ENCODE measurements at regions of chr1 and their contacts with region 1.

Region 1: GRCh38 chr1:101238681-101239094 is 1.9 kb downstream of the S1PR1 start:
- DNase-seq: peak; percentile 73 to 92 (median 86)
- ATAC-seq: peak; percentile 25
- H3K4me3 ChIP-seq: peak overlapping the region; percentile 87
- H3K4me3 Mint-ChIP-seq: peak overlapping the region; percentile 98
- H3K27ac ChIP-seq: peak overlapping the region; percentile 56 to 97
- H3K27ac Mint-ChIP-seq: peak overlapping the region; percentile 97
- H3K4me1 ChIP-seq: peaks cover 48% of the 10 kb centered on the region
- H3K4me1 Mint-ChIP-seq: peaks cover 71% of the 10 kb centered on the region
- H3K27me3 ChIP-seq: no peaks in the 10 kb centered on the region
- H3K27me3 Mint-ChIP-seq: peaks cover 3% of the 10 kb centered on the region
- CTCF ChIP-seq: peak; percentile 98

Region 2: DNA sequence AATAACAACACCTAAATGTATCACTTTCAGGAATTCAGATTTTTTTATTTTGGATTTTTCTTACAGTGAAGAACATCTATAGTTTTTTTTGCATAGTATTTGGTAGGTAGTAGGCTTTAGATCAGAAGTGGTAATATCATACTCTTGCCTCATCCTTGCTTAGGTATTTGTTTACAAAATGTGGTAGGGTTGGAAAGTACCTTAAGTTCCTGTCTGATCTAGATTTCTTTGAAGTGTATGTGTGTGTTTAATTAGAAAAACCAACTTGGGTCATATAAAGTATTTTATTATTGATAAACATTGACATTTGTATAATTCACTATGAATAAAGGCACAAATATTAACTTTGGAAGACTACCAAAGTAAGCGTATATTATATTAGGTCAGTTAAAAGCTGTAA is 786.0 kb before region 1 on chr1:
- CTCF ChIA-PET with region 1: no interaction called
- POLR2A ChIA-PET with region 1: no interaction called
- intact Hi-C with region 1: loop called in 1 of 2 experiments (anchors 5 kb)
- DNase-seq: peak in 3 of 14 experiments; percentile 83 to 87 (median 86)
- ATAC-seq: peak; percentile 88
- H3K4me3 ChIP-seq: no peak overlapping the region
- H3K4me3 Mint-ChIP-seq: peak overlapping the region; percentile 70
- H3K27ac ChIP-seq: peak overlapping the region; percentile 77 to 90
- H3K27ac Mint-ChIP-seq: peak overlapping the region; percentile 94
- H3K4me1 ChIP-seq: peaks cover 51% of the 10 kb centered on the region
- H3K4me1 Mint-ChIP-seq: peaks cover 93% of the 10 kb centered on the region
- H3K27me3 ChIP-seq: no peaks in the 10 kb centered on the region
- H3K27me3 Mint-ChIP-seq: no peaks in the 10 kb centered on the region
- CTCF ChIP-seq: no peak

Region 3: DNA sequence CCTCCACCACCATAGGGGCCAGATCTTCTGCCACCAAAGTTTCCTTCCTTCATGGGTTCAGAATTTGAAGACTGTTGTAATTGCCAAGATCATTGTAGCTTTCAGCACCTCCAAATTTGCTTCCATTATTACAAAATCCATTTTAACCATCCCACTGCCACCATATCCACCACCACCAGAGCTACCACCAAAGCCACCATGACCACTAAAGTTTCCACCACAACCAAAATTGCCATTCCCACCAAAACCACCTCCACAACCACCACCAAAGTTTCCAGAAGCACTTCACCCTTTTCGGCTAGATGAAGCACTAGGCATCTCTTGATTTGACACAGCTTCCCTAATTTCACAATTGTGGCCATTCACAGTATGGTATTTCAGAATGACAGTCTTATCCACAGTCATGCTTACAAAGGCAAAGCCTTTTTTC is 297.6 kb before region 1 on chr1:
- CTCF ChIA-PET with region 1: no interaction called
- POLR2A ChIA-PET with region 1: interaction called, 12 read pairs
- intact Hi-C with region 1: no loop called
- DNase-seq: no peak
- ATAC-seq: no peak
- H3K4me3 ChIP-seq: no peak overlapping the region
- H3K4me3 Mint-ChIP-seq: no peak overlapping the region
- H3K27ac ChIP-seq: no peak overlapping the region
- H3K27ac Mint-ChIP-seq: peak overlapping the region; percentile 90
- H3K4me1 ChIP-seq: peaks cover 11% of the 10 kb centered on the region
- H3K4me1 Mint-ChIP-seq: peaks cover 66% of the 10 kb centered on the region
- H3K27me3 ChIP-seq: no peaks in the 10 kb centered on the region
- H3K27me3 Mint-ChIP-seq: no peaks in the 10 kb centered on the region
- CTCF ChIP-seq: no peak

Region 4: GRCh38 chr1:101071470-101071891 is 167.2 kb before region 1 on chr1:
- CTCF ChIA-PET with region 1: interaction called, 3 read pairs
- POLR2A ChIA-PET with region 1: interaction called, 3 read pairs
- intact Hi-C with region 1: loop called in 1 of 2 experiments (anchors 5 kb)
- DNase-seq: no peak
- ATAC-seq: no peak
- H3K4me3 ChIP-seq: no peak overlapping the region
- H3K4me3 Mint-ChIP-seq: no peak overlapping the region
- H3K27ac ChIP-seq: no peak overlapping the region
- H3K27ac Mint-ChIP-seq: no peak overlapping the region
- H3K4me1 ChIP-seq: peaks cover 9% of the 10 kb centered on the region
- H3K4me1 Mint-ChIP-seq: peaks cover 54% of the 10 kb centered on the region
- H3K27me3 ChIP-seq: no peaks in the 10 kb centered on the region
- H3K27me3 Mint-ChIP-seq: no peaks in the 10 kb centered on the region
- CTCF ChIP-seq: no peak

Region 5: DNA sequence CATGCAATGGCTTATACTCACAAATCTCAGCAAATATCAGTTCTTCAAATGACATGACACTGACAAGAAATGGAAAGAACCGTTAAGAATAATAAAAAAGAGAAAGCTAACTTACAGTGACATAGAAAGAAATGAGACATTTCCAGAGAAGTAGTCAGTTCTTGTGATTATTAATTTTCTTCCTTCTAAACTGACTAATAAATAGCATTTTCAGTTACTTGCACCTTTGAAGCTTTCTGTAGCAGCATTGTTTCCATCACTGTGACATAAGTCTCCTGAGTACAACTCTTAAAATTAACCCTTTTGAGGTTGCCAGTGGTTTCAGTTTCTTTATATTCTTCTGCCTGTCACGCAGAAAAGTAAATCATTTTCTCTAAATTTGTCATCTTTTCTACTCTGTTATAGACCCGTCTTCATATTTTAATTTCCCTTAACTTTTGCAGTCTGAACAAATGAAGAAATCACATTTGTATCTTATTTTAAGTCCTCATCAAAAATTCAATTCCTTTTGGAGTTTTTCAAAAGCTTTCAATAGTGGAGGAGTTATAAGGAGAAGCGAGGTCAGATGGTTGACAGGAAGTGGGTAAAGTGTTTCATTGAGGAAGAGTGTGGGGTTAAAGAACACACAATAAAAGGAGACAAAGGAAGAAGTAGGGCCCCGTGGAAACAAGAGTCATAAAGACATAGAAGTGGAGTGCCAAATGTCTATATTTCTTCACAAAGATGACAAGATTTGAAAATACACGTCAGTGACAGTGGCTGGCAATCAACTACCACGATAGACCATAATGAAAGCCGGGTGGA is 59.8 kb before region 1 on chr1:
- CTCF ChIA-PET with region 1: interaction called, 5 read pairs
- POLR2A ChIA-PET with region 1: interaction called, 7 read pairs
- intact Hi-C with region 1: loop called in 1 of 2 experiments (anchors 2 kb)
- DNase-seq: peak in 4 of 14 experiments; percentile 17 to 74 (median 46)
- ATAC-seq: peak; percentile 78
- H3K4me3 ChIP-seq: peak overlapping the region; percentile 20
- H3K4me3 Mint-ChIP-seq: peak overlapping the region; percentile 70
- H3K27ac ChIP-seq: peak overlapping the region; percentile 34 to 38
- H3K27ac Mint-ChIP-seq: peak overlapping the region; percentile 86
- H3K4me1 ChIP-seq: peaks cover 10% of the 10 kb centered on the region
- H3K4me1 Mint-ChIP-seq: peaks cover 41% of the 10 kb centered on the region
- H3K27me3 ChIP-seq: no peaks in the 10 kb centered on the region
- H3K27me3 Mint-ChIP-seq: no peaks in the 10 kb centered on the region
- CTCF ChIP-seq: no peak

Region 6: DNA sequence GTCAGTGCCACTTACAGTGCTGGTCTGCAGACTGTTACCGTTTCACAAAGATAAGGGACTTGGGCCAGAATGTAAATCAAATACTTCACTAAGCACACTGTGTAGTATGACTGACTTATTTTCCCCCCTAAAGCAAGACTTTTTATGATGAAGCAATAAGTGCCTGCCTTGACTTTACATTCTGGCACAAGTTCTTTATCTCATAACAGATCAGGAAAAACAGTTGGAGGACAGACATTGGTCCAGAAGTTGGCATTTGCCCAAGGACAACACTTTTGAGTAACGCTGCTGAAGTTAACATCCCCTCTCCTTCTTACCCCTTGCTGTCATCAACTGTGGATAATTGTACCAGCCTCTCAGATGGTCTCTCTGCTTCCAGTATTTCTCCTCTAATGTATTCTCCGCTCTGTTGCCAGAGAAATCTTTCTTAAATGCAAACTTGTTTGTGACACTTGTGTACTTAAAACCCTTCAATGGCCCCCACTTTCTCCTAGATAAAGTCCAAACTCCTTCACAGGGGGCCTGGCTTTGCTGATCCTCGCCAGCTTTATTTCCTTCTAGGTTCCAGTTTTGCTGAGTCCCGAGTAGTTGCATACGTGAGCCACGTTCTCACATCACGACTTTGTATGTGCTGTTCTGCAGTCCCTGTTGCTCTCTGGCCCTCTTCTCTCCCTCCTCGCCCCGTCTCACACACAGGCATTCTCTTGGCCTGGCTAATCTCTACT is 43.8 kb after region 1 on chr1:
- CTCF ChIA-PET with region 1: interaction called, 70 read pairs
- POLR2A ChIA-PET with region 1: interaction called, 113 read pairs
- intact Hi-C with region 1: loop called in 1 of 2 experiments (anchors 1 kb)
- DNase-seq: no peak
- ATAC-seq: no peak
- H3K4me3 ChIP-seq: no peak overlapping the region
- H3K4me3 Mint-ChIP-seq: peak overlapping the region; percentile 55
- H3K27ac ChIP-seq: peak overlapping the region; percentile 67 to 80
- H3K27ac Mint-ChIP-seq: peak overlapping the region; percentile 96
- H3K4me1 ChIP-seq: peaks cover 86% of the 10 kb centered on the region
- H3K4me1 Mint-ChIP-seq: peaks cover 95% of the 10 kb centered on the region
- H3K27me3 ChIP-seq: no peaks in the 10 kb centered on the region
- H3K27me3 Mint-ChIP-seq: no peaks in the 10 kb centered on the region
- CTCF ChIP-seq: no peak

Region 7: DNA sequence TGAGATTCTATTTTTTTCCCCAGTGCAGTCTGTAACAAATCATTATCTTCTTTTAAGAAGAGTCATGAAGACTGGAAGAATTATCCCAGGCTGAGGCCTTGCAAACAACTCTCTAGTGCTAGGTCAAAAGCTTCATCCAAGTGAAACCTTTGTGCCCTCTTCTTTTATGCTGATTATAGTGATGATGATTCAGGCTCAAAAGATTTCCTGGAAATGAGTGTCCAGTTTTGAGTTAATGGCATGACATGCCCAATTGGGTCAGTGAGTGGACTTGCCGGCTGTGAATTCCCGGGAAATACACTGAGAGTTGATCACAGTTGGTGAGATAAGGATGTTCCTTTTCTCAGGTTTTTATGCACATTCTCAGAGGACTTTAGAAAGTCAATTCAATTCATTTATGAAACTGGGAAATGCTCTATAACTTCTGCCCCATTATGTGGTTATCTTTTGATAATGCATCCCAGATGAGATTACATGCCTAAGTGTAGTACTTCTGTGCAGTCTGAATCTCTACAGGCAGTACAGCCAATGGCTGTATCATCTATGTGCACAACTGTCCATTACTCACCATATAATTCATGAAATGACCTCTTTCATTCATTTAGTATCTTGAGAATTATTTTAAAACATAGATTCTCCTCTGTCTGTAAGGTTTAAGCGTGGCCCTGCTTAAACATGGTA is 64.3 kb after region 1 on chr1:
- CTCF ChIA-PET with region 1: no interaction called
- POLR2A ChIA-PET with region 1: no interaction called
- intact Hi-C with region 1: no loop called
- DNase-seq: no peak
- ATAC-seq: no peak
- H3K4me3 ChIP-seq: no peak overlapping the region
- H3K4me3 Mint-ChIP-seq: no peak overlapping the region
- H3K27ac ChIP-seq: no peak overlapping the region
- H3K27ac Mint-ChIP-seq: no peak overlapping the region
- H3K4me1 ChIP-seq: peaks cover 12% of the 10 kb centered on the region
- H3K4me1 Mint-ChIP-seq: peaks cover 25% of the 10 kb centered on the region
- H3K27me3 ChIP-seq: no peaks in the 10 kb centered on the region
- H3K27me3 Mint-ChIP-seq: no peaks in the 10 kb centered on the region
- CTCF ChIP-seq: no peak

Measured in CD4-positive, alpha-beta T cell (primary cell).